ENCODE measurements at regions of chr4 and their contacts with region 1.

Region 1: GRCh38 chr4:2963175-2963965 is at the starts of genes GRK4 and NOP14:
- DNase-seq: peak; percentile 91 to 96
- H3K4me3 ChIP-seq: peak within 1 kb of the TSS; percentile 94
- H3K27ac ChIP-seq: peak within 1 kb of the TSS; percentile 61
- H3K4me1 ChIP-seq: peaks cover 14% of the 10 kb centered on the region
- H3K27me3 ChIP-seq: no peaks in the 10 kb centered on the region
- CTCF ChIP-seq: no peak; the same call in 1 of the 2 replicates
- total RNA-seq, gene GRK4: 3.1 and 4.4 TPM in 2 replicates
- total RNA-seq, gene NOP14: 30.9 and 33.6 TPM in 2 replicates

Region 2: DNA sequence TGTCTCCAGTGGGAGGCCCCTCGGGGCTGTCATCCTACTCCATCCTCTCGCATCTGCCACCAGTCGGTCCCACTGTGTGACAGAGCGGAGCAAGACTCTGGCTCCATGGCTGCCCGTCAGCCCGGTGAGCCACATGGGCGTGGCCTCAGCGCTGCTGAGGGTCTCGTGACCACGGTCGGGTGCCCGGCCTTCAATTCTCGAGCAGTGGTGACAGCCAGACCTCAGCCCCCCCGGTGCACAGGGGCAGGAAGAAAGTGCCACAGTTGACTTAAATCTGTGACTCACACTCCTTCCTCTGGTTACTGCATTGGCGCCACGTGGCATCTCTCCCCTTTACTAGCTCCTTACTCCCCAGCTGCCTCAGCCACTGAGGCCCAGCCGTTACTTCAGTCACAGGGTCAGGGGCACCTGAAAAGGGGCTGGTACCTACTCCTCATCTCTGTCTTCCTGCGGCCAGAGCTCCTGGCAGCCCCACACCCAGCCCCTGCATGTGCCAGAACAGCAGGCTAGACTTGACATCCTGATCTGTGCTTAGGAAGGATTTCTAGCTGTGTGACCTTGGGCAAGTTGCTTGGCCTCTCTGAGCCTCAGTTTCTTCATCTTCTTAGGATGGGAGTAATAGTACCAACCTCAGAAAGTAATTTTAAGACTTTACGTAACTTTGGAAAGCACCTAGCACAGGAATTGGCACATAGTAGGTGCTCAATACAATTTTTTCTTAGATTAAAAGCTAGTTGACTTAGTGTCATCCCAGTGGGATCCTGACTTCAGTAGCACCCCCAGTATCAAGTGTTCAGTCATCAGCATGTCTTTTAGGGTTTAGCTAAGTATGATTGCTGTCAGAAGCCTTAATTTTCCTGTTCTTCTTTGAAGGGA is 273.3 kb before region 1 on chr4:
- CTCF ChIA-PET with region 1: no interaction called
- POLR2A ChIA-PET with region 1: no interaction called
- intact Hi-C with region 1: no loop called
- DNase-seq: no peak
- H3K4me3 ChIP-seq: no peak overlapping the region
- H3K27ac ChIP-seq: no peak overlapping the region
- H3K4me1 ChIP-seq: no peaks in the 10 kb centered on the region
- H3K27me3 ChIP-seq: no peaks in the 10 kb centered on the region
- CTCF ChIP-seq: no peak

Region 3: DNA sequence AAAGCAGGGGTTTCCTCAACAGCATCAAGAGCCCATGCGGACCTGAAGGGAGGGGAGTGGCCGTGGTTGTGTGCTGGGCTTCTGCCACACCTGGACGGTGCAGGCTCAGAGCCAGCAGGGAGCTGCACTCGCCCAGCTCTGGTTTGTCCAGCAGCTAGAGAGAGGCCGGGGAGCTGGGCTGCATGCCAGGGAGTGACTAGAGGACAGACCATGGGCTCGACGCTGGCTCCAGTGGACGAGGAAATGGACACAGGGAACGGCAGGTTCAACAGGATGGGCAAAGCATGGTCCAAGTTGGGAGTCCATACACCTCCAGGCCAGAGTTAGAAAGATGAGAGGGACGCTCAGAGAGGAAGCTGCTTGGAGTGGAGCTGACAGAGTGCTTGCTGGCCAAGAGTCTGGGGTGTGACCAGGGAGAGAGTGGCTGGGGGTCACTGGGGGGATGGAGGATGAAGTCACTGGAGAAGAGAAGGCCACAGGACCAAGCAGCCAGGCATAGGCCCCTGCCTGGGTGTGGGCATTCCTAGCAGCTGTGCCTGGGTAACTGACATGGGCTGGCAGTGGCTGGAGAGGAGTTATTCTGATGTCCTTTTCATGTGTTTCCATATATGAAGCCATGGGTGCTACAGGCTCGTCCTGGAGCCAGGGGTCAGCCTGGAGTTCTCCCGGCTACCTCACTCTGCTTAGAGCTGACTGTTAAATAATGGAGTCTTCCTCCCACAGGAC is 68.2 kb after region 1 on chr4:
- CTCF ChIA-PET with region 1: interaction called, 11 read pairs
- POLR2A ChIA-PET with region 1: no interaction called
- intact Hi-C with region 1: loop called (anchors 2 kb)
- DNase-seq: peak; percentile 43 to 84
- H3K4me3 ChIP-seq: no peak overlapping the region
- H3K27ac ChIP-seq: no peak overlapping the region
- H3K4me1 ChIP-seq: no peaks in the 10 kb centered on the region
- H3K27me3 ChIP-seq: no peaks in the 10 kb centered on the region
- CTCF ChIP-seq: no peak

Region 4: GRCh38 chr4:3091464-3091863 is 128.1 kb after region 1 on chr4:
- CTCF ChIA-PET with region 1: no interaction called
- POLR2A ChIA-PET with region 1: no interaction called
- intact Hi-C with region 1: no loop called
- DNase-seq: no peak
- H3K4me3 ChIP-seq: no peak overlapping the region
- H3K27ac ChIP-seq: no peak overlapping the region
- H3K4me1 ChIP-seq: no peaks in the 10 kb centered on the region
- H3K27me3 ChIP-seq: no peaks in the 10 kb centered on the region
- CTCF ChIP-seq: no peak

Measured in PC-9 (cell line).